ENCODE measurements at regions of chr18 and their contacts with region 1.

Region 1: GRCh38 chr18:79068937-79069791 is at the start of gene ATP9B:
- DNase-seq: peak; percentile 99
- H3K4me3 ChIP-seq: peak within 1 kb of the TSS; percentile 51 to 97 (median 80)
- H3K27ac ChIP-seq: peak within 1 kb of the TSS; percentile 54
- H3K4me1 ChIP-seq: peaks cover 16% of the 10 kb centered on the region
- H3K27me3 ChIP-seq: no peaks in the 10 kb centered on the region
- CTCF ChIP-seq: peak in 1 of 2 donors; percentile 4
- POLR2A ChIP-seq: peak; percentile 75
- total RNA-seq, gene ATP9B: 18.2 and 21.1 TPM in 2 replicates

Region 2: GRCh38 chr18:79019881-79020280 is 49.3 kb before region 1 on chr18:
- CTCF ChIA-PET with region 1: no interaction called
- POLR2A ChIA-PET with region 1: no interaction called
- dilution Hi-C with region 1: no loop called
- intact Hi-C with region 1: no loop called
- DNase-seq: no peak
- H3K4me3 ChIP-seq: no peak overlapping the region
- H3K27ac ChIP-seq: no peak overlapping the region
- H3K4me1 ChIP-seq: no peaks in the 10 kb centered on the region
- H3K27me3 ChIP-seq: no peaks in the 10 kb centered on the region
- CTCF ChIP-seq: no peak
- POLR2A ChIP-seq: no peak

Region 3: DNA sequence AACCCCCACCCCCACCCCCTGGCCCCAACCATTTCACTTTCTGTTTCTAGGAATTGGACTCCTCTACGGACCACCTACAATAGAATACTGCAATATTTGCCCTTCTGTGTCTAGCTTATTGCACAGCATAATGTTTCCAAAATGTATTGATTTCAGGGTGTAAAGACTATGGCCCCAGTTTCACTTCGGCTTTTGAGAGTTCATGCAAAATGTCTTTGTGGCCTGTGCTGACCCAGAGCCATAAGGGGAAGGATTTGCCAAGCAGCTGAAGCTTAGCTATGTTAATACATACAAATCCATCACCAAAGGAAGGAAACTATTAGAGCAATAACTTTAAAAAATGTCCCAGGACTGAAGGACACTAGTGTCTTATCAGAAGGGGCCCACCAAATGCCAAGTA is 11.2 kb before region 1 on chr18:
- CTCF ChIA-PET with region 1: no interaction called
- POLR2A ChIA-PET with region 1: no interaction called
- dilution Hi-C with region 1: no loop called
- intact Hi-C with region 1: no loop called
- DNase-seq: no peak
- H3K4me3 ChIP-seq: no peak overlapping the region
- H3K27ac ChIP-seq: no peak overlapping the region
- H3K4me1 ChIP-seq: no peaks in the 10 kb centered on the region
- H3K27me3 ChIP-seq: peaks cover 0 to 4% of the 10 kb centered on the region in 2 experiments
- CTCF ChIP-seq: no peak
- POLR2A ChIP-seq: no peak

Region 4: GRCh38 chr18:79117380-79117779 is 48.2 kb after region 1 on chr18:
- CTCF ChIA-PET with region 1: no interaction called
- POLR2A ChIA-PET with region 1: no interaction called
- dilution Hi-C with region 1: no loop called
- intact Hi-C with region 1: loop called (anchors 5 kb)
- DNase-seq: no peak
- H3K4me3 ChIP-seq: no peak overlapping the region
- H3K27ac ChIP-seq: no peak overlapping the region
- H3K4me1 ChIP-seq: peaks cover 5% of the 10 kb centered on the region
- H3K27me3 ChIP-seq: no peaks in the 10 kb centered on the region
- CTCF ChIP-seq: no peak
- POLR2A ChIP-seq: no peak

Region 5: GRCh38 chr18:79246348-79247108 is 177.4 kb after region 1 on chr18:
- CTCF ChIA-PET with region 1: no interaction called
- POLR2A ChIA-PET with region 1: no interaction called
- dilution Hi-C with region 1: no loop called
- intact Hi-C with region 1: loop called (anchors 1 kb)
- DNase-seq: peak; percentile 88
- H3K4me3 ChIP-seq: peak overlapping the region in 2 of 3 experiments; percentile 29 to 31
- H3K27ac ChIP-seq: peak overlapping the region; percentile 13
- H3K4me1 ChIP-seq: no peaks in the 10 kb centered on the region
- H3K27me3 ChIP-seq: no peaks in the 10 kb centered on the region
- CTCF ChIP-seq: peak; percentile 96 to 99
- POLR2A ChIP-seq: no peak

Region 6: GRCh38 chr18:79294235-79294634 is 225.1 kb after region 1 on chr18:
- CTCF ChIA-PET with region 1: no interaction called
- POLR2A ChIA-PET with region 1: no interaction called
- dilution Hi-C with region 1: no loop called
- intact Hi-C with region 1: no loop called
- DNase-seq: no peak
- H3K4me3 ChIP-seq: no peak overlapping the region
- H3K27ac ChIP-seq: no peak overlapping the region
- H3K4me1 ChIP-seq: no peaks in the 10 kb centered on the region
- H3K27me3 ChIP-seq: no peaks in the 10 kb centered on the region
- CTCF ChIP-seq: no peak
- POLR2A ChIP-seq: no peak

Region 7: GRCh38 chr18:79672490-79673276 is 603.5 kb after region 1 on chr18:
- CTCF ChIA-PET with region 1: no interaction called
- POLR2A ChIA-PET with region 1: no interaction called
- dilution Hi-C with region 1: no loop called
- intact Hi-C with region 1: no loop called
- DNase-seq: no peak
- H3K4me3 ChIP-seq: no peak overlapping the region
- H3K27ac ChIP-seq: no peak overlapping the region
- H3K4me1 ChIP-seq: no peaks in the 10 kb centered on the region
- H3K27me3 ChIP-seq: no peaks in the 10 kb centered on the region
- CTCF ChIP-seq: no peak
- POLR2A ChIP-seq: no peak

Measured in endothelial cell of umbilical vein (primary cell).